ENCODE measurements at regions of chr18 and their contacts with region 1.

Region 1: DNA sequence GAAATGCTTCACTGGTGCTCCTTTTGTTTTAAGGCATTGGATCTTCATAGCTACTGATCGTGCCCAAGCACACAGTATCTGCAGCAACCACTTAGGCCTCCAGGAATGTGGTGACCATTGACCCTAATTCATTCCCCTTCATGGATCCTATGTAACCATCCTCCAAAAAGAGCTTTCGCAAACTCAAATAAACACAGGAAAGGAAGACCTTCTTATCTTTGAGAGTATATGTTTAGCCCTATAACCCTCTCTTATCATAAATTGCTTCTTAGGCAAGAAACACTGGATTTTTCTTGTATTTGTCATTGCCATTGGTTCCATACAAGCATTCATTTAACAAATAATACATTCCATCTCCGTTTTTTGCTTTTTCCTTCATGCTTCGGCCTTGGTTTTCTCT is 4.1 kb upstream of the TTR start:
- DNase-seq: peak; percentile 90
- ATAC-seq: peak; percentile 80
- H3K4me3 ChIP-seq: peak overlapping the region in 2 of 3 experiments; percentile 9 to 41; a peak in 1 of 6 replicates
- H3K27ac ChIP-seq: peak overlapping the region; percentile 45
- H3K4me1 ChIP-seq: peaks cover 92% of the 10 kb centered on the region
- H3K27me3 ChIP-seq: no peaks in the 10 kb centered on the region
- CTCF ChIP-seq: no peak
- EP300 ChIP-seq: peak in 1 of 2 experiments; percentile 91; a peak in 2 of 4 replicates
- POLR2A ChIP-seq: no peak
- RAD21 ChIP-seq: no peak

Region 2: GRCh38 chr18:31146809-31147208 is 440.7 kb before region 1 on chr18:
- CTCF ChIA-PET with region 1: no interaction called
- POLR2A ChIA-PET with region 1: no interaction called
- in situ Hi-C with region 1: no loop called
- intact Hi-C with region 1: no loop called
- DNase-seq: no peak
- ATAC-seq: no peak
- H3K4me3 ChIP-seq: no peak overlapping the region
- H3K27ac ChIP-seq: no peak overlapping the region
- H3K4me1 ChIP-seq: no peaks in the 10 kb centered on the region
- H3K27me3 ChIP-seq: no peaks in the 10 kb centered on the region
- CTCF ChIP-seq: no peak
- EP300 ChIP-seq: no peak
- POLR2A ChIP-seq: no peak
- RAD21 ChIP-seq: no peak

Region 3: GRCh38 chr18:31572368-31572767 is 15.2 kb before region 1 on chr18:
- CTCF ChIA-PET with region 1: interaction called, 3 read pairs
- POLR2A ChIA-PET with region 1: interaction called, 19 read pairs
- in situ Hi-C with region 1: no loop called
- intact Hi-C with region 1: no loop called
- DNase-seq: no peak
- ATAC-seq: no peak
- H3K4me3 ChIP-seq: no peak overlapping the region
- H3K27ac ChIP-seq: no peak overlapping the region
- H3K4me1 ChIP-seq: peaks cover 53% of the 10 kb centered on the region
- H3K27me3 ChIP-seq: no peaks in the 10 kb centered on the region
- CTCF ChIP-seq: no peak
- EP300 ChIP-seq: no peak
- POLR2A ChIP-seq: no peak
- RAD21 ChIP-seq: no peak

Region 4: GRCh38 chr18:31603315-31603714 is 15.8 kb after region 1 on chr18:
- CTCF ChIA-PET with region 1: no interaction called
- POLR2A ChIA-PET with region 1: interaction called, 10 read pairs
- in situ Hi-C with region 1: no loop called
- intact Hi-C with region 1: no loop called
- DNase-seq: no peak
- ATAC-seq: no peak
- H3K4me3 ChIP-seq: no peak overlapping the region
- H3K27ac ChIP-seq: no peak overlapping the region
- H3K4me1 ChIP-seq: peaks cover 38% of the 10 kb centered on the region
- H3K27me3 ChIP-seq: no peaks in the 10 kb centered on the region
- CTCF ChIP-seq: no peak
- EP300 ChIP-seq: no peak
- POLR2A ChIP-seq: no peak
- RAD21 ChIP-seq: no peak

Measured in HepG2 (cell line).